ENCODE measurements at regions of chr2 and their contacts with region 1.

Region 1: DNA sequence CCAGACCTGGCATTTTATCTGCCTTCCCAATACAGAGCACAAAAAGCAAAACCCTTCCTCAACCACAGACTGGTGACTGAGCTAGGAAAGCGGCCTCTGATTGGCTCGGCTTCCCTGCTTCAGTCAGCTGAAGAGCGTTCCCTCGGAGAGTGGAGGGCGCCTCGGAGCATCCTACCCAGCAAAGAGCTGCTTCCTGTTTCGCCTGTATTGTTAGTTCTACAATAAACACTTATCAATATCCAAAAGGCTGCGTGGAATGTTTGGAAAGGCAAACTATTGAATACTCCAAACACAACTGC is 125.0 kb downstream of the CACNB4 start:
- DNase-seq: peak; percentile 7 to 55
- H3K4me3 ChIP-seq: no peak overlapping the region
- H3K27ac ChIP-seq: no peak overlapping the region
- H3K4me1 ChIP-seq: peaks cover 0 to 5% (median 3%) of the 10 kb centered on the region in 4 experiments; a peak in 3 of 7 replicates
- H3K27me3 ChIP-seq: no peaks in the 10 kb centered on the region
- CTCF ChIP-seq: no peak
- EP300 ChIP-seq: no peak
- POLR2A ChIP-seq: no peak
- RAD21 ChIP-seq: no peak

Region 2: GRCh38 chr2:151984424-151985083 is 10.7 kb after region 1 on chr2:
- CTCF ChIA-PET with region 1: interaction called, 10 read pairs
- POLR2A ChIA-PET with region 1: no interaction called
- DNase-seq: no peak
- H3K4me3 ChIP-seq: no peak overlapping the region
- H3K27ac ChIP-seq: no peak overlapping the region
- H3K4me1 ChIP-seq: no peaks in the 10 kb centered on the region
- H3K27me3 ChIP-seq: no peaks in the 10 kb centered on the region
- CTCF ChIP-seq: no peak
- EP300 ChIP-seq: no peak
- POLR2A ChIP-seq: no peak
- RAD21 ChIP-seq: no peak

Measured in H1 (cell line).